Ovary (tissue), 10 donors: ENCODE measurements at regions of chrX and their contacts with region 1.

Region 1: GRCh38 chrX:25144043-25144940 is 128.5 kb upstream of the ARX start:
- DNase-seq: peak; percentile 55 to 79 (median 77)
- H3K4me3 ChIP-seq: no peak overlapping the region
- H3K27ac ChIP-seq: no peak overlapping the region
- H3K4me1 ChIP-seq: no peaks in the 10 kb centered on the region
- H3K27me3 ChIP-seq: no peaks in the 10 kb centered on the region
- CTCF ChIP-seq: peak; percentile 53 to 59 (median 58)
- EP300 ChIP-seq: no peak
- POLR2A ChIP-seq: no peak

Region 2: DNA sequence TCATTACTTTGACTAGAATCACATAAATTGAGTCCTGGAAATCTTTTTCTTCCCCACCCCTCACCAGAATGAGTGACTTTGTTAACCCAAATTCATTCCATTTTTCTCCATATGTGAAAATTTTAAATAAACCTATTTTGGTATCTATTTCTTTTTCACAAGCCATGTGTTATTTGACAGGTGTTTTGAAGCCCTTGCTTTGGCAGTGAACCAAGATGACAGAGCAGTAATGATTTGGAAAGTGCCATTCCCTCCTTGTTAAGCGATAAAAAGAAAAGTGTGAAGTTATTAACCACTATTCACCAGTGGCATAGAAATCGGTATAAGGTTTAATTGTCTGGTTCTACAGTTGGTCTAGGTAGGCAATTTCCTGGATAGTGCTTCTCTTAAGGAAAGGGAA is 384.5 kb before region 1 on chrX:
- intact Hi-C with region 1: loop called in 2 of 4 experiments (anchors 10 kb)
- DNase-seq: no peak
- H3K4me3 ChIP-seq: no peak overlapping the region
- H3K27ac ChIP-seq: no peak overlapping the region
- H3K4me1 ChIP-seq: no peaks in the 10 kb centered on the region
- H3K27me3 ChIP-seq: no peaks in the 10 kb centered on the region
- CTCF ChIP-seq: no peak
- EP300 ChIP-seq: no peak
- POLR2A ChIP-seq: no peak

Region 3: GRCh38 chrX:24838629-24839028 is 305.7 kb before region 1 on chrX:
- intact Hi-C with region 1: loop called in 2 of 4 experiments (anchors 10 kb)
- DNase-seq: no peak
- H3K4me3 ChIP-seq: no peak overlapping the region
- H3K27ac ChIP-seq: no peak overlapping the region
- H3K4me1 ChIP-seq: no peaks in the 10 kb centered on the region
- H3K27me3 ChIP-seq: no peaks in the 10 kb centered on the region
- CTCF ChIP-seq: peak; percentile 19 to 42 (median 28)
- EP300 ChIP-seq: no peak
- POLR2A ChIP-seq: no peak

Region 4: DNA sequence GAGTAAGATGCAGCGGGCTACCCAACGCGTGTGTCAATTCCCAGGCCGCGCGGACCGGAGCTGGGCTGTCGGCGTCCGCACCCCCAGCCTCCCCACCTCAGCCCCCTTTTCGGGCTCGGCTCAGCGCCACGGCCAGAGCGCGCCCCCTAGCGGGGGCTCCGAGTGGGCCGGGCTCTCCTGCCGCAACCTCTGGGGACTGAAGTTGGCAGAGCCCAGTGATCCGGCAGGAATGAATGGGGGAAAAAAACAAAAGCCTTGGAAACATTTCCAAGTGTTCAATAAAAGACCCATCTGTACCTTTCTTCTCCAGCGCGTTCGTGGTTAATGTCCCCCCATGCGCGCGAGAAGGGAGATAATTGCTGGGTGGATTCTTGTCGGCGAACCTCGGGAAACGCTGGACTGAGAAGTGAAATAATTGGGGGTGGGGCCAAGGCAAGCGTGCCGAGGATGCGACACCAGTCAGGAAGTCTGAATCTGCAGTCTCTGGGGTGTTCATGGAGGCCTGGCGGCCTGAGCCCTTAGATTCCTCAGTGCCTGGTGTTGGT is 123.3 kb before region 1 on chrX:
- intact Hi-C with region 1: loop called in 1 of 4 experiments (anchors 5 kb)
- DNase-seq: peak; percentile 50 to 76 (median 66)
- H3K4me3 ChIP-seq: peak overlapping the region; percentile 22
- H3K27ac ChIP-seq: no peak overlapping the region
- H3K4me1 ChIP-seq: no peaks in the 10 kb centered on the region
- H3K27me3 ChIP-seq: no peaks in the 10 kb centered on the region
- CTCF ChIP-seq: peak; percentile 34 to 65 (median 52)
- EP300 ChIP-seq: no peak
- POLR2A ChIP-seq: no peak